GM10248 (cell line): ENCODE measurements at regions of chr1 and their contacts with region 1.

Region 1: GRCh38 chr1:32052887-32053286 is 19.9 kb upstream of the TMEM39B start:
- DNase-seq: no peak
- CTCF ChIP-seq: no peak

Region 2: DNA sequence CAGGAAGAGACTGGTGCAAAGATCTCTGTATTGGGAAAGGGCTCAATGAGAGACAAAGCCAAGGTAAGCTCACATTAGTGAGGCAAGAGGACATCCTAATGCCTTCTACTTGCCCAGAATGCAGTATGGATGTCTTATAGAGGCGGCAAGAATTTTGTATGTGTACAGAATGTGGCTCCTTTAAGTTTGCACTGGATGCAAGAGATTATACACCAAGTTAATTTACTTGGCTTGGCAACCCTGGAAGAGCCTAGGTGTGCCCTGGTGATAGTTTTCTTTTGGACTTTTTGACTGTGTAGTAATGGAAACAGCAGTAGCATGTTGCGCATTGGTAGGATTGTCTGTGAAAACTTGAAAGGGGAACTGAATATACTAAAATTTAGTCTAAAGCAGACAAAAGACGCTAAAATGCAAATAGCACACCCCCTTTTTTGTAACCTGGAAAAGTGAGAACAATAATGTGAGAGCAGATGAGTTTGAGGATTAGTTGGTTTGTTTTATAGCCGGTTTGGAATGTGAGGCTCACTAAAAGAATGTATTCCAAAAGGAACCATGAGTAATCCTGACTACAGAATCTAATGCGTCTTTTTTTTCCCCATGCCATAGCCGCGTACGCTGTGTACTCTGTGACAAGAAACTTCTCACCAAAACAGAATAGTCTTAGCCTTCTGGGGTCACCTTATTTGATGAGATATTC is 21.2 kb before region 1 on chr1:
- CTCF ChIA-PET with region 1: interaction called, 12 read pairs
- POLR2A ChIA-PET with region 1: no interaction called
- DNase-seq: no peak
- CTCF ChIP-seq: no peak

Region 3: GRCh38 chr1:32042330-32042729 is 10.6 kb before region 1 on chr1:
- CTCF ChIA-PET with region 1: interaction called, 18 read pairs
- POLR2A ChIA-PET with region 1: interaction called, 3 read pairs
- DNase-seq: no peak
- CTCF ChIP-seq: no peak

Region 4: DNA sequence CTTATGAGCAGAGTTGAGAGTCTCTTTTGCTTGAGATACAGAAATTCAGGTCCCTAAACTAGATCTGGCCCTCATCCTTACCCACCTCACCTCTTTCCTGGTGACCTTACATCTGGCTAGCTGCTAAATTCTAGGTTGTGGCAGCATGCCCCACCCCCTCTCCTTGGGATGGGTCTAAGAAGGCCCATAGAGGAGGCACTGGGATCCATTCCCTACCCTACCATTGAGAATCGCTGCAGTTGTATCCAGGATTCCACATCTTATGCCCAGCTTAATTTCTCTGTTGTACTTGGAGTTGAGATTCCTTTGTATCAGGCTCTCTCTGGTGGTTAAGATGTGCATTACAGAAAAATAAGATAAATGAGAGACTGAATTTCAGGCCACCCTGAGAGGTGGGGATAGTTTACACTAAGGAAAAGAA is 10.4 kb after region 1 on chr1:
- CTCF ChIA-PET with region 1: interaction called, 23 read pairs
- POLR2A ChIA-PET with region 1: no interaction called
- DNase-seq: peak; percentile 43
- CTCF ChIP-seq: peak; percentile 61

Region 5: DNA sequence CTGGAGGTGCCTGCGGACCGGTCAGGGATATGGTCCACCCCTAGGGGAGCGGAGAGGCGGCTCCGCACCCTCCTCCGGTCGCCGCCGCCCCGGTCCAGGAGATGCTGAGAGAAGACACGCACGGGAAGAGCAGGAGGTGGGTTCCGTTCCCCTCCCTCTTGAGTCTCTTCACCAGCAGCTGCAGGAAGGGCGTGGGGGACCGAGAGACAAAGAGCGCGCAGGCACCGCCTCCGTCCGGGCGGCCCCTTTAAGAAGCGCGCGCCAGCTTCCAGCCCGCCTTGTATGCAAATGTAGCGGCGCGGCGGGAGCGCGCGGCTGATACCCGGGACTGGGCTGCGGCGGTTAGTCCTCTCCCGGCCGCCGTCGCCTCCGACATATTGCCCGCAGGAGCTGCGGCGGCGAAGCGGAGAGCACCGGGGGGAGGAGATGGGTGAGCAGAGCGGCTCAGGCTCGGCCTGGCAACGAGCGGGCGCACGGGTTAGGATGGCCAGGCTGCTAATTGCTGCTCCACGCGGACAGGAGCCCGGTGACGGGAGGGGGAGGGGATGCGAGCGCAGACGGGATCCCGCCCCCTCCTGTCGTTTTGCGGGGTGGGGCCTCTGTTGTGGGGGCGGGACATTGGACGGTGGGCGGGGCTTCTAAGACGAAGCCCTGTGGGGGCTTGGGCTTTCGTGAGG is 19.9 kb after region 1 on chr1 and contains the start of gene TMEM39B:
- CTCF ChIA-PET with region 1: interaction called, 10 read pairs
- POLR2A ChIA-PET with region 1: no interaction called
- DNase-seq: peak; percentile 98
- CTCF ChIP-seq: no peak